ENCODE measurements at regions of chr22 and their contacts with region 1.

Region 1: GRCh38 chr22:31983911-31984656 is 39.7 kb downstream of the YWHAH start:
- DNase-seq: no peak
- ATAC-seq: no peak
- H3K4me3 ChIP-seq: no peak overlapping the region
- H3K27ac ChIP-seq: no peak overlapping the region
- H3K4me1 ChIP-seq: no peaks in the 10 kb centered on the region
- H3K27me3 ChIP-seq: no peaks in the 10 kb centered on the region
- CTCF ChIP-seq: no peak
- POLR2A ChIP-seq: no peak

Region 2: GRCh38 chr22:32080904-32081303 is 96.8 kb after region 1 on chr22:
- intact Hi-C with region 1: loop called (anchors 10 kb)
- DNase-seq: peak in 3 of 4 donors; percentile 28 to 39 (median 29)
- ATAC-seq: peak; percentile 52
- H3K4me3 ChIP-seq: no peak overlapping the region
- H3K27ac ChIP-seq: no peak overlapping the region
- H3K4me1 ChIP-seq: peaks cover 19% of the 10 kb centered on the region
- H3K27me3 ChIP-seq: no peaks in the 10 kb centered on the region
- CTCF ChIP-seq: peak in 6 of 7 experiments; percentile 30 to 72 (median 58)
- POLR2A ChIP-seq: no peak

Region 3: GRCh38 chr22:32112380-32112779 is 128.3 kb after region 1 on chr22:
- intact Hi-C with region 1: no loop called
- DNase-seq: no peak
- ATAC-seq: no peak
- H3K4me3 ChIP-seq: no peak overlapping the region
- H3K27ac ChIP-seq: no peak overlapping the region
- H3K4me1 ChIP-seq: no peaks in the 10 kb centered on the region
- H3K27me3 ChIP-seq: no peaks in the 10 kb centered on the region
- CTCF ChIP-seq: no peak
- POLR2A ChIP-seq: no peak

Region 4: DNA sequence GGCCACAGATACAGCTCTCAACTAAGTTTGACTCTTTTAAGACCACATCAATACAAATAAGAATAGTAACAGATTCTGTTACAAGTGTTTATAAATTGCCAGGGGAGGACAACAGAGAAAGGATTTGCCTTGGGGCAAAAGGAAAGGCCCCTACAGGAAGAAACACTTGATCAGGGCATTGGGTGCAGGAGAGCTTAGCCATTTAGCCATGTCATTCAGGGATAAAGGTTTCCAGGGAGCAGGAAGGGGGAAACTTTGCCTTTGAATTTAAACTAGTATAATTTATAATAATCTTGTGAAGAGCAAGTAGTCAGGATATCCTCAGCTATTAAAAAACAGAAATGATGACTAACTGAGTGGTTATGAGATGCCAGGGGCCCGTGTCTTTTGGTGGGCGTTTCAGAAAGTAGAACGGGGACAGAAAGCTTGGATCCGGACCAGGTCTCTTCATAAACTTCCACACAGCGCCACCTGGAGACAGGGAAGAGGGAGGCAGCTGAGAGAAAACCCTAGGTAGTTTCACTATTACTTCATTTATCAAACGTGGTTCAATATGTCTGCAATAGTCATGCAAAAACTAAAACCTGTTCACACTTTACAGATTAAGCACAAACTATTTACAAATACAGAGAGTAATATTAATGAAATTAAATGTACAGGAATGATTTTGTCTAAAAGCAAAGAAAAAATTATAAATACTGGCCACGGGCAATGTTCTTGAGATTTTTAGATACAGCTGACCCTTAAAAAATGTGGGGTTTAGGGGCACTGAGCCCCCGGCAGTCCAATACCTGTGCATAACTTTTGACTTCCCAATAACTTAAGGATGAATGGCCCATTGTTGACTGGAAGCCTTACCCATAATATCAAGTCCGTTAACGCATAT is 282.0 kb after region 1 on chr22:
- intact Hi-C with region 1: loop called (anchors 10 kb)
- DNase-seq: peak; percentile 74 to 81 (median 77)
- ATAC-seq: peak; percentile 60
- H3K4me3 ChIP-seq: no peak overlapping the region
- H3K27ac ChIP-seq: no peak overlapping the region
- H3K4me1 ChIP-seq: no peaks in the 10 kb centered on the region
- H3K27me3 ChIP-seq: no peaks in the 10 kb centered on the region
- CTCF ChIP-seq: peak; percentile 67 to 79 (median 78)
- POLR2A ChIP-seq: no peak